PC-9 (cell line): ENCODE measurements at regions of chr2 and their contacts with region 1.

Region 1: GRCh38 chr2:110770959-110771431 is 38.6 kb downstream of the ACOXL start:
- DNase-seq: no peak
- H3K4me3 ChIP-seq: no peak overlapping the region
- H3K27ac ChIP-seq: no peak overlapping the region
- H3K4me1 ChIP-seq: no peaks in the 10 kb centered on the region
- H3K27me3 ChIP-seq: no peaks in the 10 kb centered on the region
- CTCF ChIP-seq: no peak

Region 2: DNA sequence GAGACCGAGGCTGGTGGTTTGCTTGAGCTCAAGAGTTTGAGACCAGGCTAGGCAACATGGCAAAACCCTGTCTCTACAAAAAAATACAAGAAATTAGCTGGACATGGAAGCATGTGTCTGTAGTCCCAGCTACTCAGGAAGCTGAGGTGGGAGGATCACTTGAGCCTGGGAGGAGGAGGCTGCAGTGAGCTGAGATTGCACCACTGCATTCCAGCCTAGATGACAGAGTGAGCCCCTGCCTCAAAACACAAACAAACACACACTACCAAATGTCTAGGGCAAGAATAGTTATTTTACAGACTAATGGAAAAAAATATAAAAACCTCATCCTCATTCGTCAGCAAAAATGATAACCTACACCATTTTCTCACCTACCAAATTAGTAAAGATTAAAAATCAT is 108.4 kb before region 1 on chr2:
- CTCF ChIA-PET with region 1: no interaction called
- POLR2A ChIA-PET with region 1: no interaction called
- intact Hi-C with region 1: no loop called
- DNase-seq: no peak
- H3K4me3 ChIP-seq: no peak overlapping the region
- H3K27ac ChIP-seq: no peak overlapping the region
- H3K4me1 ChIP-seq: no peaks in the 10 kb centered on the region
- H3K27me3 ChIP-seq: no peaks in the 10 kb centered on the region
- CTCF ChIP-seq: no peak

Region 3: DNA sequence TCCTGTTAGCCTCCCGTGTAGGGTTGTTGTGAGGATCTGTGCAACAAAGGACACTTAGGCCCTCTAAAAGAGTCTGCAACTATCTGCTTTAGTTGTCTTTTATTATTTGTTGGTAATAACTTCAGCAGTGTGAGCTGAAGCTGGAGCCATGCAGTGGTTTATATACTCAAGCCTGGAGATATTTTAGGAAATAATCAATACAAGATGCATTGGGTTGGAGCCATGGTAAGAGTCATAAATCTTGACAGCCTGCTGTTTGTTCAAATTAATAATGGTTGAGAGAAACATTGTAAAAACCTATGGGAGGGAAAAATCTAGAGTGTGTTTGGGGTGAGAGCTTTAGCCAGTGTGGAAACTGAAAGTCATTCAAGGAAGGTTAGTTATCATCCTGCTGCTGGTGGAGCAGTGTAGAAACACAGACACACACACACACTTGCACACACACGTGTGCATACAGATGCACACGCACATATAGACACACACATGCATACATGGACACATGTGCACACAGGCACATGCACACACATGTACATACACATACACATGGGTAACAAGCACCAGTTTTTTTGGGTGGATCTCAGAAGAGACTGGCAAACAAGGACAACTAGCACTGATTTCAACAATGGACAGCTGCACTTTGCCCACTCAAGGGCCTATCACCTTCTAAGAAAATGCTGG is 12.3 kb after region 1 on chr2:
- CTCF ChIA-PET with region 1: interaction called, 10 read pairs
- POLR2A ChIA-PET with region 1: no interaction called
- intact Hi-C with region 1: no loop called
- DNase-seq: no peak
- H3K4me3 ChIP-seq: no peak overlapping the region
- H3K27ac ChIP-seq: no peak overlapping the region
- H3K4me1 ChIP-seq: no peaks in the 10 kb centered on the region
- H3K27me3 ChIP-seq: no peaks in the 10 kb centered on the region
- CTCF ChIP-seq: no peak

Region 4: GRCh38 chr2:110818767-110819481 is 47.9 kb after region 1 on chr2:
- CTCF ChIA-PET with region 1: no interaction called
- POLR2A ChIA-PET with region 1: no interaction called
- intact Hi-C with region 1: no loop called
- DNase-seq: no peak
- H3K4me3 ChIP-seq: no peak overlapping the region
- H3K27ac ChIP-seq: no peak overlapping the region
- H3K4me1 ChIP-seq: no peaks in the 10 kb centered on the region
- H3K27me3 ChIP-seq: no peaks in the 10 kb centered on the region
- CTCF ChIP-seq: no peak; the same call in 1 of the 2 replicates

Region 5: GRCh38 chr2:111071600-111072171 is 300.7 kb after region 1 on chr2:
- CTCF ChIA-PET with region 1: no interaction called
- POLR2A ChIA-PET with region 1: no interaction called
- intact Hi-C with region 1: no loop called
- DNase-seq: peak; percentile 16 to 84
- H3K4me3 ChIP-seq: no peak overlapping the region
- H3K27ac ChIP-seq: peak overlapping the region; percentile 61
- H3K4me1 ChIP-seq: peaks cover 55% of the 10 kb centered on the region
- H3K27me3 ChIP-seq: no peaks in the 10 kb centered on the region
- CTCF ChIP-seq: no peak